Activated B cell treated with CpG ODN at 0.5 μM for 24 hours (primary cell): ENCODE measurements at regions of chr17 and their contacts with region 1.

Region 1: DNA sequence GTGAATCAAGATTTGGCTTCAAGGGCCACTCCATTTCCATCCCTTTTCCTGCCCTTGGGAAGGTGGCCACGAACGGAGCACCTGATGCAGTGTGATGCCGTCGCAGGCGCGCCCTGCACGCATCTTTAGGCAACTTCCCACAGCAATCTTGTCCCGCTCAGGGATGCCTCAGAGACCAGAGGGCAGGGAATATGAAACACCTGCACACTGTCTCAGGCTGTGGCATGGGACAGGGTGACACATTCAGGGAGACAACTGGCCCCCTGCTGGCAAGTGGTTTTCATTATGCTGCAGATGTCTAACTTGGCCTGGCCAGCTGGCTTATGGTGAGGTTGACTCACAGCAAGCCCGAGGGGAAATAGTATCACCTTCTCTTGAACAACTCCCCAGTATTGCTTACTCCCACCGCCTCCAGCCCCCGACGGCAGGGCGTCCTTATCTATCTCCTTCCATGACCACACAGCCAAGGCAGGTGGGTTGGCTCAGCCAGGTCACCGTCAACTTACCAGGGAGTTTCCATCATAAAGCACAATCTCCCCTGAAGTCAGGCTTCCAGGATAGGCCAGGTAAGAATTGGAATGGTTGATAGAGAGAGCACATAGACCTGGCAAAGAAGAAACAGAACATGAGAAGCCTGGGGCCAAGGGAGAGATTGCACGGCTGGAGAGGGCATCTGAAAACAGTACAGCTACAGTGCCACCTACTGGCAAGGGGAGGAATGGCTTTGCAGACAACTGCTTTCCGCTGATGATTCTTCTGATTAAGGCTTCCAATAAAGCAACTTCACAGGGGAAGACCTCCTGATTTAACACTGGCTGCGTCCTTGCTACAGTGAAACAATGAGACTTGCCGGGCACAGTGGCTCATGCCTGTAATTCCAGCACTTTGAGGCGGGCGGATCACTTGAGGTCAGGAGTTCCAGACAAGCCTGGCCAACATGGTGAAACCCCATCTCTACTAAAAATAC is 21.1 kb downstream of the WIPI1 start:
- DNase-seq: peak; percentile 60
- ATAC-seq: peak; percentile 78
- H3K4me3 Mint-ChIP-seq: no peak overlapping the region
- H3K27ac Mint-ChIP-seq: peak overlapping the region; percentile 54
- H3K4me1 Mint-ChIP-seq: peaks cover 50% of the 10 kb centered on the region
- H3K27me3 Mint-ChIP-seq: no peaks in the 10 kb centered on the region
- CTCF ChIP-seq: peak; percentile 61

Region 2: GRCh38 chr17:67959288-67959900 is 476.8 kb before region 1 on chr17:
- CTCF ChIA-PET with region 1: no interaction called
- POLR2A ChIA-PET with region 1: no interaction called
- intact Hi-C with region 1: loop called (anchors 1 kb)
- DNase-seq: no peak
- ATAC-seq: no peak
- H3K4me3 Mint-ChIP-seq: no peak overlapping the region
- H3K27ac Mint-ChIP-seq: no peak overlapping the region
- H3K4me1 Mint-ChIP-seq: peaks cover 3% of the 10 kb centered on the region
- H3K27me3 Mint-ChIP-seq: no peaks in the 10 kb centered on the region
- CTCF ChIP-seq: no peak

Region 3: GRCh38 chr17:68238164-68238872 is 197.8 kb before region 1 on chr17:
- CTCF ChIA-PET with region 1: no interaction called
- POLR2A ChIA-PET with region 1: interaction called, 12 read pairs
- intact Hi-C with region 1: no loop called
- DNase-seq: no peak
- ATAC-seq: no peak
- H3K4me3 Mint-ChIP-seq: peak overlapping the region; percentile 79
- H3K27ac Mint-ChIP-seq: peak overlapping the region; percentile 99
- H3K4me1 Mint-ChIP-seq: peaks cover 72% of the 10 kb centered on the region
- H3K27me3 Mint-ChIP-seq: no peaks in the 10 kb centered on the region
- CTCF ChIP-seq: no peak

Region 4: GRCh38 chr17:68255731-68256538 is 180.2 kb before region 1 on chr17:
- CTCF ChIA-PET with region 1: interaction called, 49 read pairs
- POLR2A ChIA-PET with region 1: interaction called, 3 read pairs
- intact Hi-C with region 1: no loop called
- DNase-seq: no peak
- ATAC-seq: no peak
- H3K4me3 Mint-ChIP-seq: peak overlapping the region; percentile 16
- H3K27ac Mint-ChIP-seq: peak overlapping the region; percentile 89
- H3K4me1 Mint-ChIP-seq: peaks cover 83% of the 10 kb centered on the region
- H3K27me3 Mint-ChIP-seq: no peaks in the 10 kb centered on the region
- CTCF ChIP-seq: no peak

Region 5: DNA sequence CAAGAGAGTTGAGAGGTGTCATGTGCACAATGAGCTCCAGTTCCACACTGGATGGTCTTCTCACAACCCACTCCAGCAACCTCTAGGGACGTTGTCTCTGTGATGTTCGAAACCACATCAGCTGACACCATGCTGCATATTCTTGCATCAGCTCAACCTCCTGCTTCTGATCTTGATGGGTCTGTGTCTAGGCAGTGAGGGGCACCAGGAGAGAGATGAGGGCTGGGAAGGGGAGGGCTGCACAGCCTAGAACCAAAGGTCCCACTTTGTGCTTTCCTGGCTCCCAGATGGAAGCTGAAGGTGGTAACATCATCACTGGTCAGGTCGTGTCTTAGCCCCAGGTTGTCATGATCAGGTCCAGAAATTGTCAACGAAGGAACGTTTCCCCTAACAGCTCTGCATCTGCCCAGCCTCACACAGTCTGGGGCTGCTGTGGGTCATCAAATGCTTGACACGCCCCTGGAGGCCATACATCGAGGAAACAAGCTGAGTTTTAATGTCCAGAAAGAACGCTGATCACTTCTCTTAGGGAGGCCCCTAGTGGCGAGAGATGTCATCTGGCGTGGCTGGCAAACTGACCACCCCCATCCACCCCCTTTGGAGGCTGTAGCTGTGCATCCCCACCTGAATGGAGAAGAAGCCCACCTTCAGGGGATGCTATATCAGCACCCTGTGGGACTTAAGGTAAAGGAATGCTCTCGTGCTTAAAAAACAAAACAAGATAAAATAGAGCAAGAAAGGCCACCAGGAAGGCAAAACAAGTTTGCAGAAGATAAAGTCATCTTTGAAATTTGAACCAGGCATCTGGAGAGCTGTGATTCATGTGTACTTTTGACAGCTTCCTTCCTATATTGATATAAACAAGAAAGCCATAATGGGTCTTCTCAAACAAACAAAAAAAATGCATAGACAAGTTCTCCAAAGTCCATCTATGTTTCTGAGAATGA is 37.2 kb before region 1 on chr17:
- CTCF ChIA-PET with region 1: interaction called, 9 read pairs
- POLR2A ChIA-PET with region 1: interaction called, 3 read pairs
- intact Hi-C with region 1: loop called (anchors 1 kb)
- DNase-seq: peak; percentile 23
- ATAC-seq: peak; percentile 76
- H3K4me3 Mint-ChIP-seq: no peak overlapping the region
- H3K27ac Mint-ChIP-seq: peak overlapping the region; percentile 62
- H3K4me1 Mint-ChIP-seq: peaks cover 7% of the 10 kb centered on the region
- H3K27me3 Mint-ChIP-seq: no peaks in the 10 kb centered on the region
- CTCF ChIP-seq: no peak

Region 6: DNA sequence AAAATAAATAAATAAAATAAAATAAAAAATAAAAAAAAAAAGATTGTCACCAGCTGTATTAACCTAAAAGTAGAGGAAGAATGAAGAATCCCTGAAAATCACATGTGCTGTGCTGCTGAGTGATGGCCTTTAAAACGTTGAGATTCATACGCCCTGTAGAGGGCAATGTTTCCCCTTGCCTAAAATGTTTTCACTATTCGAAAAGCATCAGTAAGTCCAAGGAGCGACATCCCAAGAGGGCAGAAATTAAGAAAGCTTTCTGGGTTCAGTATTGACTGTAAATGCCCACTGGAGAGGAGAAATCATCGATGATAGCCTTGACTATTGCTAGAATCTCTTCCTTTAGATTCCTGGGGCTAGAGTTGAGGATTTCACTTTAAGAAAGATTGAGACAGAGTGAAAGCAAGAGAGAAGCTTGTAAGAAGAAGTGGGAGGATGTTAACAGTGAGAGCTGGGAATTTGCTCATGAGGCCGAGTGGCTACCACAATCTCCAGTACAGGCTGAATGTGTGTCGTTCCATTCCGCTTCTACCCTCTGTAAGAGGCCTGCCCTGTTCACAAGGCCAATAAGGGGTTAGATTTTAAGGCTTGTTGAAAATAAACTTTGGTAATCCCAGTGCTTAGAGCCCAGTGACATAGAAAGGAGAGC is 335.8 kb after region 1 on chr17:
- CTCF ChIA-PET with region 1: no interaction called
- POLR2A ChIA-PET with region 1: no interaction called
- intact Hi-C with region 1: no loop called
- DNase-seq: no peak
- ATAC-seq: peak; percentile 79
- H3K4me3 Mint-ChIP-seq: peak overlapping the region; percentile 70
- H3K27ac Mint-ChIP-seq: peak overlapping the region; percentile 69
- H3K4me1 Mint-ChIP-seq: peaks cover 20% of the 10 kb centered on the region
- H3K27me3 Mint-ChIP-seq: no peaks in the 10 kb centered on the region
- CTCF ChIP-seq: peak; percentile 17

Region 7: DNA sequence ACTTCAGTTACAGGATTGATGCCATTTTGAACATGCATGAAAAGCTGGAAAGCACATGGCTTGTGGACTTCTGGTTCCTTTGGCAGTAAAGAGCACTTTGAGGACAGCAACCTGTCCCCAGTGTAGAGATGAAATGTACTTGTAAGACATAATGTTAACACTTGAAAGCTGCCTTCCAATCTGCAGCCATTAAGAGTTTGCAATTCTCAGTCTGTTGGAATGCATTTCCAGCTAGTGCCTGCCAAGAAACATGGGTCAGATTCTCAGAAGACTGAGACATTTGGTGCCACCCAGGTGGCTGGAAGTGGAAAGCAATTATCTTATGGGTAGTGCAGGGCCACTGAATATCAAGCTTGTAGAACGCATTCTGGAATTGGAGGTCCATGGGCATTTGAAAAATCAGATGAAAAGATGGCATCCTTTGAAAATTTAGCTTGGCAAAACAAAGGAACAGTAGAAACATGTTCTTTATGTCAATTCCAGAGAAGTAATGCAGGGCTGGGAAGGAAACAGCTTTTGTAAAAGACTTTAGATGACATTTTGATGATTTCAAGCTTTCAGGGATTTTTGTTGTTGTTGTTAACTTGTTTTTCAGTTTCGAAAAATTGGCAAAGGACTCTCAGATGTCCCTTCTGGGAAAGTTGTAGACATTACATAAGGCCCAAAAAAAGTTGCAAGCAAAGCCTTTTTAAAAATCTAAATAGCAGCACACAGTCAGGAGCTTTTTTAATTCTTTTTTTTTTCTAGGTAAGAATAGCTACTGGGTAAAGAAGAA is 372.0 kb after region 1 on chr17:
- CTCF ChIA-PET with region 1: no interaction called
- POLR2A ChIA-PET with region 1: no interaction called
- intact Hi-C with region 1: no loop called
- DNase-seq: no peak
- ATAC-seq: no peak
- H3K4me3 Mint-ChIP-seq: no peak overlapping the region
- H3K27ac Mint-ChIP-seq: no peak overlapping the region
- H3K4me1 Mint-ChIP-seq: no peaks in the 10 kb centered on the region
- H3K27me3 Mint-ChIP-seq: no peaks in the 10 kb centered on the region
- CTCF ChIP-seq: no peak